CD8-positive, alpha-beta T cell (primary cell): ENCODE measurements at regions of chr19 and their contacts with region 1.

Region 1: GRCh38 chr19:55653758-55654539 is 886 bp upstream of the U2AF2 start:
- DNase-seq: peak; percentile 98 to 100 (median 99)
- ATAC-seq: peak; percentile 77
- H3K4me3 ChIP-seq: peak overlapping the region; percentile 72 to 89
- H3K4me3 Mint-ChIP-seq: peak overlapping the region; percentile 95
- H3K27ac ChIP-seq: peak overlapping the region; percentile 79 to 100
- H3K27ac Mint-ChIP-seq: peak overlapping the region; percentile 97
- H3K4me1 ChIP-seq: peaks cover 38% of the 10 kb centered on the region
- H3K4me1 Mint-ChIP-seq: peaks cover 44% of the 10 kb centered on the region
- H3K27me3 ChIP-seq: peaks cover 0 to 5% of the 10 kb centered on the region in 2 experiments
- H3K27me3 Mint-ChIP-seq: no peaks in the 10 kb centered on the region
- CTCF ChIP-seq: peak; percentile 100

Region 2: GRCh38 chr19:54189735-54190502 is 1464.0 kb before region 1 on chr19:
- CTCF ChIA-PET with region 1: no interaction called
- POLR2A ChIA-PET with region 1: no interaction called
- intact Hi-C with region 1: loop called in 1 of 2 experiments (anchors 2 kb)
- DNase-seq: peak; percentile 99 to 100 (median 100)
- ATAC-seq: peak; percentile 62
- H3K4me3 ChIP-seq: peak overlapping the region; percentile 69 to 76
- H3K4me3 Mint-ChIP-seq: peak overlapping the region; percentile 91
- H3K27ac ChIP-seq: peak overlapping the region; percentile 100
- H3K27ac Mint-ChIP-seq: peak overlapping the region; percentile 100
- H3K4me1 ChIP-seq: peaks cover 22% of the 10 kb centered on the region
- H3K4me1 Mint-ChIP-seq: peaks cover 38% of the 10 kb centered on the region
- H3K27me3 ChIP-seq: no peaks in the 10 kb centered on the region
- H3K27me3 Mint-ChIP-seq: no peaks in the 10 kb centered on the region
- CTCF ChIP-seq: no peak

Region 3: GRCh38 chr19:55339048-55339888 is 314.7 kb before region 1 on chr19 and contains the start of gene KMT5C:
- CTCF ChIA-PET with region 1: no interaction called
- POLR2A ChIA-PET with region 1: interaction called, 3 read pairs
- intact Hi-C with region 1: loop called in 1 of 2 experiments (anchors 2 kb)
- DNase-seq: peak; percentile 100
- ATAC-seq: peak; percentile 75
- H3K4me3 ChIP-seq: peak within 1 kb of the TSS; percentile 67 to 80
- H3K4me3 Mint-ChIP-seq: peak within 1 kb of the TSS; percentile 94
- H3K27ac ChIP-seq: peak within 1 kb of the TSS; percentile 94 to 100
- H3K27ac Mint-ChIP-seq: peak within 1 kb of the TSS; percentile 95
- H3K4me1 ChIP-seq: peaks cover 24% of the 10 kb centered on the region
- H3K4me1 Mint-ChIP-seq: peaks cover 20% of the 10 kb centered on the region
- H3K27me3 ChIP-seq: peaks cover 0 to 6% of the 10 kb centered on the region in 2 experiments
- H3K27me3 Mint-ChIP-seq: peaks cover 6% of the 10 kb centered on the region
- CTCF ChIP-seq: no peak
- total RNA-seq, gene KMT5C: 82.0 to 84.4 TPM

Region 4: GRCh38 chr19:55599468-55600279 is 54.3 kb before region 1 on chr19 and contains the start of gene FIZ1:
- CTCF ChIA-PET with region 1: interaction called, 4 read pairs
- POLR2A ChIA-PET with region 1: interaction called, 12 read pairs
- intact Hi-C with region 1: loop called (anchors 1 kb)
- DNase-seq: peak; percentile 90 to 98 (median 95)
- ATAC-seq: peak; percentile 69
- H3K4me3 ChIP-seq: peak within 1 kb of the TSS; percentile 80 to 81
- H3K4me3 Mint-ChIP-seq: peak within 1 kb of the TSS; percentile 100
- H3K27ac ChIP-seq: peak within 1 kb of the TSS; percentile 75 to 95
- H3K27ac Mint-ChIP-seq: peak within 1 kb of the TSS; percentile 99
- H3K4me1 ChIP-seq: peaks cover 14% of the 10 kb centered on the region
- H3K4me1 Mint-ChIP-seq: peaks cover 29% of the 10 kb centered on the region
- H3K27me3 ChIP-seq: no peaks in the 10 kb centered on the region
- H3K27me3 Mint-ChIP-seq: no peaks in the 10 kb centered on the region
- CTCF ChIP-seq: no peak
- total RNA-seq, gene FIZ1: 6.7 to 8.4 TPM

Region 5: DNA sequence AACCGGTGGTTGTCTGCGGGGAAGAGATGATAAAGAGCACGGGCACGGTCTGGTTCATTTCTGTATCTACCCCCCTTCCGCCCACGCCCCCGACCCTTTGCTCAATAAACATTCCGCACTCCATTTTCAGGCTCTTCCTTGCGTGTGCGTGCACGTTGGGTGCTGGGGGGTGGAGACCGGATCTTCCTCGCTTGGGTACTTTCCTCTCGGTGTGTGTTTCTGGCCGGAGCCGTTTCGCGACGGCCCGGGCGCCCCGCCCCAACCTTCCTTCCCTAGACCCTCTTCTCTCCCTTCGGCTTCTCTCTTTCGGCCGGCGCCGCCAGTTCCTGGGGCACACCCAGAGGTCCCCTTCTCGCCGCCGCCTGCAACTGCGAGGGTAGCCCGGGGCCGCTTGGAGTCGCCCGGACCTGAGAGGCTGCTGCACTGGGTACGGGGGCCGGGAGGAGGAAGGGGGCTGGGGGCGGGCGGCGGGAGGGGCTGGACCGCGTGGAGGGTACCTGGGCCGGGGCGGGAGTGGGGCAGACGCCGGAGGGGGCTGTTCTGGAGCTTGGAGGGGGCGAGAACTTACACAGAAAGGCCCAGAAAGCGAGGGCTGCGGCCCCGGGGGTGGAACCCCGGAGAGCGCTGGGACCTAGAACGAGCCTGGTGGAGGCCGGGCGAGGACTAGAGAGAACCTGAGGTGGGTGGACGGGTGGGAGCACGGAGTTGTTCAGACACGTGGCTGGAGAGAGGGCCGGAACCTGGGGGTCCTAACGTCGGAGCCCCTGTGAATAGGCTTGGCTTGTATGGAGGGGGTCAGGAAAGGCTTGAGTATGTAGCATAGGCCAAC is 10.4 kb before region 1 on chr19 and contains the start of gene ZNF581:
- CTCF ChIA-PET with region 1: interaction called, 31 read pairs
- POLR2A ChIA-PET with region 1: interaction called, 34 read pairs
- intact Hi-C with region 1: loop called (anchors 1 kb)
- DNase-seq: peak; percentile 53 to 91 (median 77)
- ATAC-seq: peak; percentile 55
- H3K4me3 ChIP-seq: peak within 1 kb of the TSS; percentile 66 to 73
- H3K4me3 Mint-ChIP-seq: peak within 1 kb of the TSS; percentile 95
- H3K27ac ChIP-seq: peak within 1 kb of the TSS; percentile 65 to 79
- H3K27ac Mint-ChIP-seq: peak within 1 kb of the TSS; percentile 97
- H3K4me1 ChIP-seq: peaks cover 42% of the 10 kb centered on the region
- H3K4me1 Mint-ChIP-seq: peaks cover 55% of the 10 kb centered on the region
- H3K27me3 ChIP-seq: no peaks in the 10 kb centered on the region
- H3K27me3 Mint-ChIP-seq: no peaks in the 10 kb centered on the region
- CTCF ChIP-seq: no peak
- total RNA-seq, gene ZNF581: 25.6 to 25.7 TPM

Region 6: DNA sequence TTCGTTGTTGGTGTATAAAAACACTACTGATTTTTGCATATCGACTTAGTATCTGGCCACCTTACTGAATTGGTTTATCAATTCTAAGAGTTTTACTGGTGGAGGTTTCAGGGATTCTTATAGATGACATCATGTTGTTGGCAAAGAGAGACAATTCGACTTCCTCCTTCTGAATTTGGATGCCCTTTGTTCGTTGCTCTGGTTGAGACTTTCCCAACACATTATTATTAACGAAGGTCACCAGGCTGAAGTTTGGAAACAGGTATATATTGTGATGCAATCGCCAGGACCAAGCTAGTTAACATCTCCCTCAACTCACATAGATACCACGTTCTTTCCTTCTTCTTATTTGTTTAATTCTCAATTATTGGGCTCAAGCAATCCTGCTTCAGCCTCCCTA is 545.7 kb after region 1 on chr19:
- CTCF ChIA-PET with region 1: no interaction called
- POLR2A ChIA-PET with region 1: no interaction called
- intact Hi-C with region 1: no loop called
- DNase-seq: no peak
- ATAC-seq: no peak
- H3K4me3 ChIP-seq: no peak overlapping the region
- H3K4me3 Mint-ChIP-seq: no peak overlapping the region
- H3K27ac ChIP-seq: no peak overlapping the region
- H3K27ac Mint-ChIP-seq: no peak overlapping the region
- H3K4me1 ChIP-seq: no peaks in the 10 kb centered on the region
- H3K4me1 Mint-ChIP-seq: no peaks in the 10 kb centered on the region
- H3K27me3 ChIP-seq: no peaks in the 10 kb centered on the region
- H3K27me3 Mint-ChIP-seq: peaks cover 3% of the 10 kb centered on the region
- CTCF ChIP-seq: no peak

Region 7: DNA sequence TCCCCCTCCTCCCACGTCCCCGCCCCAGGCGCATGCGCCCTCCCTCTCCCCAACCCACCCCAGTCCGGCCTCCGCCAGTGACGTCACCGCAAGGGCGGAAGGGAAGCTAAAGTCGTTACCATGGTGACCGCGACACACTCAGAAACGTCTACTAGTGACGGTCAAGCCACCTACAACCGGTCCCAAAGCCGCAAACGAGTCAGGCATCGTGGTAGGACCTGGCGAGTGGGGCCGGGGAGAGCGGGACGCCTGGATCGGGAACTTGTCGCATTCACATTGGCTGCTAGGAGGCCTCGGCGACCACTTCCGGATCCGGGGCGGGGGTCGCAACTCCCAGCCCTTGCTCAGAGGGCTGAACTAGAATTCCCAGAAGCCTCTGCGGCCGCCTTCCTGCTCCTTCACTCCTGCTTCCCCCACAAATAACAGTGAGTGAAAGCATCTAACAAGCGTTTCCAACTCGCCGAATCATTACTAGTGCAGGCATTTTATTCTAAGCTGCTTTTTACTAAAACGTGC is 660.7 kb after region 1 on chr19 and contains the start of gene ZSCAN5A:
- CTCF ChIA-PET with region 1: no interaction called
- POLR2A ChIA-PET with region 1: no interaction called
- intact Hi-C with region 1: loop called (anchors 10 kb)
- DNase-seq: peak; percentile 93 to 99 (median 98)
- ATAC-seq: peak; percentile 73
- H3K4me3 ChIP-seq: peak within 1 kb of the TSS; percentile 87 to 88
- H3K4me3 Mint-ChIP-seq: peak within 1 kb of the TSS; percentile 95
- H3K27ac ChIP-seq: peak within 1 kb of the TSS; percentile 96 to 100
- H3K27ac Mint-ChIP-seq: peak within 1 kb of the TSS; percentile 99
- H3K4me1 ChIP-seq: peaks cover 21% of the 10 kb centered on the region
- H3K4me1 Mint-ChIP-seq: peaks cover 26% of the 10 kb centered on the region
- H3K27me3 ChIP-seq: no peaks in the 10 kb centered on the region
- H3K27me3 Mint-ChIP-seq: no peaks in the 10 kb centered on the region
- CTCF ChIP-seq: no peak
- total RNA-seq, gene ZSCAN5A: 4.6 to 7.0 TPM